ENCODE measurements at regions of chr10 and their contacts with region 1.

Region 1: GRCh38 chr10:104254493-104255310 is at the start of gene GSTO1:
- DNase-seq: peak; percentile 51
- ATAC-seq: peak; percentile 93
- H3K4me3 ChIP-seq: peak within 1 kb of the TSS; percentile 68 to 73
- H3K27ac ChIP-seq: peak within 1 kb of the TSS; percentile 76
- H3K4me1 ChIP-seq: peaks cover 14 to 29% of the 10 kb centered on the region in 2 experiments
- H3K27me3 ChIP-seq: no peaks in the 10 kb centered on the region
- CTCF ChIP-seq: no peak
- POLR2A ChIP-seq: peak; percentile 79
- RAD21 ChIP-seq: no peak
- total RNA-seq, gene GSTO1: 179 TPM

Region 2: GRCh38 chr10:104045151-104046089 is 209.3 kb before region 1 on chr10:
- CTCF ChIA-PET with region 1: interaction called, 4 read pairs
- POLR2A ChIA-PET with region 1: interaction called, 3 read pairs
- RAD21 ChIA-PET with region 1: interaction called in 1 of 2 experiments, 3 read pairs
- intact Hi-C with region 1: loop called (anchors 1 kb)
- DNase-seq: peak; percentile 74
- ATAC-seq: peak; percentile 93
- H3K4me3 ChIP-seq: no peak overlapping the region
- H3K27ac ChIP-seq: no peak overlapping the region
- H3K4me1 ChIP-seq: peaks cover 15 to 38% of the 10 kb centered on the region in 2 experiments
- H3K27me3 ChIP-seq: no peaks in the 10 kb centered on the region
- CTCF ChIP-seq: peak in 2 of 3 experiments; percentile 90 to 94; a peak in 4 of 6 replicates
- POLR2A ChIP-seq: no peak
- RAD21 ChIP-seq: no peak

Region 3: DNA sequence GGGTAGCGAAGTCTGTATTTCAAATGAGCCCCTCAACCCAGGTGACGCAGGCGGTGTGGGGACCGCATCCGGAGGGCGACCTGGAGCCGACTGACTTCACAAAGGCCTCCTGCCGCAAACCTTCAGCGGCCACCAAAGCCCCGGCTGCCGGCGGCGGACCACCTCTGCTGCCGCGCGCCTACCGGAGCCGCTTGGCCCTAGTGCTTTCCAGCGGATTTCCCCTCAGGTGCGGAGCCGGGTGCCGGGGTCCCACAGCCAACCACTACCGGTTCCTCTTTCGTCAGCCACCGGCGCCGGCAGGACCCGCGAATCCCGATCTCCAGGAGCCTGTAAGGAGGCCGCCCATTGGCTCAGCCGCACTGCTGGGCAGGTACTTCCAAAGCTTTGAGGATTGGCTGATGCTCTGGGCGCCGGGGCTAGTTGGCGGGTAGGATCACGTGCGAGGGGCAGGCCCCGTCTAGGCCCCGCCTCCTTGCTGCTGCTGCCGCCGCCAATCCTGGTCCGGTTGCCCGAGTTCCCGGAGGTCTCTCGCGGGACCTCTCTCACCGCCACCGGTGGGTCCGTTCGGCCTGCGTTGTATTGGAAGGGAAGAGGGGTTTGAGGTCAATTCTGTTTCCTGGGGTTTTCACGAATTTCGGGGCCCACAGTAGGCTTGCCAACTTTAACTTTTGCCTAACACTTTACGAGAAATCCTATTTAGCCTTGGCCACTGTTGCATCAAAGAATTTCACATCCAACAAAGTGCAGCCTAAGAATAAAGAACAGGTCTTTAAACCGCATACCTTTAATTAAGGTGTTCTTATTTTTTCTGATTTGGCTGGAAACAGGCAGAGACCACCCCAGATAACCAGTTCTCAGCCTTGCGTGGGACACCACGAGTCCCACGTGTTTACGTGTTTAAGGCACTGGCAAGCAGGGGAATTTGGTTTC is 14.3 kb after region 1 on chr10 and contains the start of gene GSTO2:
- CTCF ChIA-PET with region 1: interaction called, 22 read pairs
- POLR2A ChIA-PET with region 1: interaction called, 14 read pairs
- RAD21 ChIA-PET with region 1: no interaction called
- intact Hi-C with region 1: no loop called
- DNase-seq: peak; percentile 99
- ATAC-seq: peak; percentile 98
- H3K4me3 ChIP-seq: peak within 1 kb of the TSS; percentile 79 to 81
- H3K27ac ChIP-seq: peak within 1 kb of the TSS; percentile 50
- H3K4me1 ChIP-seq: peaks cover 4 to 20% of the 10 kb centered on the region in 2 experiments; a peak in 3 of 4 replicates
- H3K27me3 ChIP-seq: no peaks in the 10 kb centered on the region
- CTCF ChIP-seq: no peak
- POLR2A ChIP-seq: peak; percentile 94
- RAD21 ChIP-seq: no peak
- total RNA-seq, gene GSTO2: 115 TPM